ENCODE measurements at regions of chr1 and their contacts with region 1.

Region 1: GRCh38 chr1:205775015-205775716 is at the start of gene RAB29:
- DNase-seq: peak; percentile 71 to 95 (median 85)
- ATAC-seq: peak; percentile 86
- H3K4me3 ChIP-seq: peak within 1 kb of the TSS; percentile 81 to 82
- H3K4me3 Mint-ChIP-seq: peak within 1 kb of the TSS; percentile 92
- H3K27ac ChIP-seq: peak within 1 kb of the TSS; percentile 86 to 97
- H3K27ac Mint-ChIP-seq: peak within 1 kb of the TSS; percentile 97
- H3K4me1 ChIP-seq: peaks cover 33% of the 10 kb centered on the region
- H3K4me1 Mint-ChIP-seq: peaks cover 53% of the 10 kb centered on the region
- H3K27me3 ChIP-seq: no peaks in the 10 kb centered on the region
- H3K27me3 Mint-ChIP-seq: no peaks in the 10 kb centered on the region
- CTCF ChIP-seq: no peak
- total RNA-seq, gene RAB29: 14.0 to 15.9 TPM

Region 2: GRCh38 chr1:205211169-205211838 is 563.9 kb before region 1 on chr1 and contains the start of gene DSTYK:
- CTCF ChIA-PET with region 1: no interaction called
- POLR2A ChIA-PET with region 1: no interaction called
- intact Hi-C with region 1: loop called in 1 of 2 experiments (anchors 5 kb)
- DNase-seq: peak; percentile 83 to 96 (median 91)
- ATAC-seq: peak; percentile 92
- H3K4me3 ChIP-seq: peak within 1 kb of the TSS; percentile 55 to 93
- H3K4me3 Mint-ChIP-seq: peak within 1 kb of the TSS; percentile 96
- H3K27ac ChIP-seq: peak within 1 kb of the TSS; percentile 58 to 80
- H3K27ac Mint-ChIP-seq: peak within 1 kb of the TSS; percentile 98
- H3K4me1 ChIP-seq: peaks cover 15% of the 10 kb centered on the region
- H3K4me1 Mint-ChIP-seq: peaks cover 50% of the 10 kb centered on the region
- H3K27me3 ChIP-seq: no peaks in the 10 kb centered on the region
- H3K27me3 Mint-ChIP-seq: no peaks in the 10 kb centered on the region
- CTCF ChIP-seq: no peak
- total RNA-seq, gene DSTYK: 15.4 to 17.2 TPM

Region 3: GRCh38 chr1:205711104-205712020 is 63.8 kb before region 1 on chr1:
- CTCF ChIA-PET with region 1: interaction called, 29 read pairs
- POLR2A ChIA-PET with region 1: interaction called, 3 read pairs
- intact Hi-C with region 1: loop called (anchors 1 to 5 kb)
- DNase-seq: peak in 8 of 9 experiments; percentile 34 to 86 (median 66)
- ATAC-seq: peak; percentile 95
- H3K4me3 ChIP-seq: no peak overlapping the region
- H3K4me3 Mint-ChIP-seq: no peak overlapping the region
- H3K27ac ChIP-seq: no peak overlapping the region
- H3K27ac Mint-ChIP-seq: no peak overlapping the region
- H3K4me1 ChIP-seq: no peaks in the 10 kb centered on the region
- H3K4me1 Mint-ChIP-seq: peaks cover 13% of the 10 kb centered on the region
- H3K27me3 ChIP-seq: no peaks in the 10 kb centered on the region
- H3K27me3 Mint-ChIP-seq: no peaks in the 10 kb centered on the region
- CTCF ChIP-seq: peak; percentile 90

Region 4: GRCh38 chr1:205750138-205751035 is 24.8 kb before region 1 on chr1 and contains the start of gene NUCKS1:
- CTCF ChIA-PET with region 1: interaction called, 5 read pairs
- POLR2A ChIA-PET with region 1: interaction called, 70 read pairs
- intact Hi-C with region 1: loop called (anchors 1 kb)
- DNase-seq: peak; percentile 91 to 99 (median 96)
- ATAC-seq: peak; percentile 77
- H3K4me3 ChIP-seq: peak within 1 kb of the TSS; percentile 78 to 91
- H3K4me3 Mint-ChIP-seq: peak within 1 kb of the TSS; percentile 93
- H3K27ac ChIP-seq: peak within 1 kb of the TSS; percentile 79 to 82
- H3K27ac Mint-ChIP-seq: peak within 1 kb of the TSS; percentile 98
- H3K4me1 ChIP-seq: peaks cover 30% of the 10 kb centered on the region
- H3K4me1 Mint-ChIP-seq: peaks cover 37% of the 10 kb centered on the region
- H3K27me3 ChIP-seq: no peaks in the 10 kb centered on the region
- H3K27me3 Mint-ChIP-seq: no peaks in the 10 kb centered on the region
- CTCF ChIP-seq: no peak
- total RNA-seq, gene NUCKS1: 70.5 to 95.3 TPM

Measured in CD8-positive, alpha-beta T cell (primary cell).